ENCODE measurements at regions of chr10 and their contacts with region 1.

Region 1: GRCh38 chr10:59625721-59626522 is 83.7 kb downstream of the SLC16A9 start:
- DNase-seq: peak; percentile 59
- H3K4me3 Mint-ChIP-seq: no peak overlapping the region
- H3K27ac Mint-ChIP-seq: no peak overlapping the region
- H3K4me1 Mint-ChIP-seq: peaks cover 3% of the 10 kb centered on the region
- H3K27me3 Mint-ChIP-seq: peaks cover 2% of the 10 kb centered on the region

Region 2: DNA sequence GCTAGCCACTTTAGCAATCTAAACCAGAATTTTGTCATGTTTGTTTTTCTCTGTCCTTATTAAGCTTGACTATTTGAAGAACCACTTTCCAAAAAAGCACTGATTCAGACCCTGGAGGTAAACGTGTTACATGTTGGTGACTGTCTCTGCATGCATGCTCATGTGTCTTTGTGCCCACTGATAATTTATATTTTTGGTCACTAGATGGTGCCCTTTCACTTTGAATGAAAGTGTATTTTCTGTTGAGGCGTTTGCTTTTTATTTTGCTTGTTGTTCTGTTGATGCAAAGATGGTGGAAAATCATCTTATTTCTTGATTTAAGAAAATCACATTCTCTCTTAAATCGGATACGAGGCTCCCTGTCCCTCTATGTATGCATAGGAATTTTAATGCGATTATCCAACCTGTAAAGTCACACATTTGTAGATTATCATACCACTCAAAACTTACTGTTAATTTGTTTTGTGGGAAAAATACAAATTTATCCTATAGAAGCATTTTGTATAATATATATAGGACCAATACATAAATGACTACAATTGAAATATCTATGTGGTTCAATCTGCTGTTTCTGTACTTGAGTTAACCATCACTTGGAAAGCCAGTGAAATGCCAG is 843.9 kb before region 1 on chr10:
- CTCF ChIA-PET with region 1: interaction called, 15 read pairs
- intact Hi-C with region 1: loop called (anchors 1 kb)
- DNase-seq: peak; percentile 4
- H3K4me3 Mint-ChIP-seq: no peak overlapping the region
- H3K27ac Mint-ChIP-seq: no peak overlapping the region
- H3K4me1 Mint-ChIP-seq: no peaks in the 10 kb centered on the region
- H3K27me3 Mint-ChIP-seq: peaks cover 8% of the 10 kb centered on the region

Region 3: GRCh38 chr10:59513558-59513957 is 112.4 kb before region 1 on chr10:
- CTCF ChIA-PET with region 1: no interaction called
- intact Hi-C with region 1: no loop called
- DNase-seq: no peak
- H3K4me3 Mint-ChIP-seq: no peak overlapping the region
- H3K27ac Mint-ChIP-seq: no peak overlapping the region
- H3K4me1 Mint-ChIP-seq: no peaks in the 10 kb centered on the region
- H3K27me3 Mint-ChIP-seq: peaks cover 2% of the 10 kb centered on the region

Region 4: DNA sequence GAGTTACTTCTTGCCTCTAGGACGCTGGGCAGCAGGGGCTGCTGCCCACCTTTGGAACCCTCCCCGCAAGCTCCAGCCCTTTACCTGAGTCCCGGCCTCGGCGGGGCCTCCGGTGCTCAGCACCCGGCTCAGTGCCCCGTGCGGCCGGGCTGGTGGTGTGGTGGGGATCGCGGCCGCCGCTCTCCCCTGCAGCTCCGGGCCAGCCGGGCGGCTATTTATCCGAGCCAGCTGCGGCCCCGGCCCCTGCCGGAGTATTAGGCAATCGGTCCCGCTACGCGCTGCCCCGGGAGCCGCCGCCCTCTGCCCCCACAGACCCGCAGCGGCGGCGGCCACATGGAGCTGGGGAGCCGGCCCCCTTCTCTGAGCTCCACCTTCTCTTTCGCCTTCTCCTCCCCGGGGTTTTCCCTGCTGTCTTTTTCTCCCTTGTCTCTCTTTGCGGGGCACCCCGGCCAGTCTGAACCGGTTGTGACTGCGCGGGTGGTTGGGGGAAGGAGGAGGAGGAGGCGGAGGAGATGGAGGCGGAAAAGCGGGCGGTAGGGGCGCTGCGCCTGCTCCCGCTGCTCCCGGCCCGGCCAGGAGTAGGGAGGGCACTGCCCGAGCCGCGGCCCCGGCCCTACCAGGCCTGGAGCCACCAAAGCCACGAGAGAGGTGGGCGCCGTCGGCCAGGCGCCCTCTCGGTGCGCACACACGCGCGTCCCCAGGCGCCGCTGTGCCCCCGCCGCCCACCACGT is 83.6 kb after region 1 on chr10 and contains the start of gene SLC16A9:
- CTCF ChIA-PET with region 1: interaction called, 3 read pairs
- intact Hi-C with region 1: loop called (anchors 5 kb)
- DNase-seq: peak; percentile 89
- H3K4me3 Mint-ChIP-seq: peak within 1 kb of the TSS; percentile 72
- H3K27ac Mint-ChIP-seq: no peak within 1 kb of the TSS
- H3K4me1 Mint-ChIP-seq: peaks cover 8% of the 10 kb centered on the region
- H3K27me3 Mint-ChIP-seq: peaks cover 62% of the 10 kb centered on the region
- total RNA-seq, gene SLC16A9: 0.84 to 0.86 TPM

Region 5: DNA sequence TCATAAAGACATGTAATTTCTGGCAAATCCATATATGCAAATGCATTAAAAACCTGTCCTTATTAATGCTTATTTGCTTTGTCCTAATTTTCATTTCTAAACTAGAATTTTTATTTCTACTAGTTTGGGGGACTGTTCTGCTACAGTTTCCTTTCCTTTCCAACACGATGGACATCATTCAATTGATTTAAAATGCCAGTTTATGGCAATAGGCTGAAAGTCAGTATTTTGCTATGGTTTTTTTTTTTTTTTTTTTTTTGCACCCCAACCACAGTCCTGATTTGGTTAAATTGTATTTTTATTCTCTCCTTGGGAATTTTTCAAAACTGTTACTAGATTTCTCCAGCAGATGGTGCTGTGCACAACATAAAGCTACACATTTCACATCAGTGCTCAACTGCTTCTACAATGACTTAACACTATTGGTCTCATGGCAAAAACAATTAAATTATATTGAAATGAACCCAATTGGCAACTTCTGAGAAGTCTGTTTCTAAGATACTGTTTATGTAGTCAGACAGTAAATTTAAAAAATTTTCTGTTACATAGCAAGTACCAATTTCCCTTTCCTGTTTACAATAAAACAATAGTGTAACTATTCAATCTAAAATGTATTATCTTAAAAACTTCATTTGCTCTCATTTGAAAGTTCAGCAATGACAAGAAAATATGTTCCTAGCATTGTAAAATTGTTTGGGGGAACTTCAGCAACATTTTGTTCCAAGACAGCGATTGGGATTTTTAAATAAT is 474.3 kb after region 1 on chr10:
- CTCF ChIA-PET with region 1: interaction called, 4 read pairs
- intact Hi-C with region 1: loop called (anchors 1 kb)
- DNase-seq: peak; percentile 8
- H3K4me3 Mint-ChIP-seq: no peak overlapping the region
- H3K27ac Mint-ChIP-seq: no peak overlapping the region
- H3K4me1 Mint-ChIP-seq: no peaks in the 10 kb centered on the region
- H3K27me3 Mint-ChIP-seq: no peaks in the 10 kb centered on the region

Region 6: GRCh38 chr10:60646966-60647796 is 1021.3 kb after region 1 on chr10:
- CTCF ChIA-PET with region 1: interaction called, 3 read pairs
- intact Hi-C with region 1: loop called (anchors 1 kb)
- DNase-seq: peak; percentile 71
- H3K4me3 Mint-ChIP-seq: no peak overlapping the region
- H3K27ac Mint-ChIP-seq: no peak overlapping the region
- H3K4me1 Mint-ChIP-seq: peaks cover 10% of the 10 kb centered on the region
- H3K27me3 Mint-ChIP-seq: no peaks in the 10 kb centered on the region

Measured in activated naive CD4-positive, alpha-beta T cell treated with anti-CD3 and anti-CD28 coated beads for 36 hours (primary cell).